ENCODE measurements at regions of chr12 and their contacts with region 1.

Region 1: DNA sequence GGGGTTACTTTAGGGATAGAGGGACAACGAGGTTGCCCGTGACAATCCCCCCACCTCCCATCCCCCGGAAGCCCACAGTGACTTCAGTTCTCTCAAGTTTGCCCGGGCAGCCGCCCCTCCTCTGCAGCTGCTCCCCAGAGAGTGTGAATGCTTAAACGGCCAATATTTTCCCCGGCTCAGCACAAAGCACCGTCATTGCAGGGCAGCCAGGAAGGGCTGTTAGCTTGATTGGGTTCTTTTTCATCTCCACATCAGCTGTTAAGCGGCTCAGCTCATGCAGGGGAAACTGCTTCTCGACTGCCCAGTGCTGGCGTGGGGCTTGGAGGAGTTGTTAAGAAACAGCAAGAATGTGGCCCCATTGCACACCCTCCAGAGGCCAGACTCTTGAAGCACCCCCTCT is 120.5 kb upstream of the NCOR2 start:
- DNase-seq: no peak
- H3K4me3 ChIP-seq: no peak overlapping the region
- H3K27ac ChIP-seq: no peak overlapping the region
- H3K4me1 ChIP-seq: peaks cover 41% of the 10 kb centered on the region
- H3K27me3 ChIP-seq: no peaks in the 10 kb centered on the region
- CTCF ChIP-seq: no peak

Region 2: GRCh38 chr12:124609041-124609995 is 78.6 kb before region 1 on chr12:
- CTCF ChIA-PET with region 1: no interaction called
- dilution Hi-C with region 1: loop called (anchors 5 kb)
- in situ Hi-C with region 1: no loop called
- intact Hi-C with region 1: loop called (anchors 2 kb)
- DNase-seq: peak; percentile 82
- H3K4me3 ChIP-seq: no peak overlapping the region
- H3K27ac ChIP-seq: peak overlapping the region; percentile 12
- H3K4me1 ChIP-seq: peaks cover 22% of the 10 kb centered on the region
- H3K27me3 ChIP-seq: no peaks in the 10 kb centered on the region
- CTCF ChIP-seq: no peak

Region 3: GRCh38 chr12:124620751-124621660 is 66.9 kb before region 1 on chr12:
- CTCF ChIA-PET with region 1: no interaction called
- dilution Hi-C with region 1: loop called (anchors 10 kb)
- in situ Hi-C with region 1: no loop called
- intact Hi-C with region 1: loop called (anchors 2 kb)
- DNase-seq: peak; percentile 94
- H3K4me3 ChIP-seq: no peak overlapping the region
- H3K27ac ChIP-seq: peak overlapping the region; percentile 51
- H3K4me1 ChIP-seq: peaks cover 46% of the 10 kb centered on the region
- H3K27me3 ChIP-seq: no peaks in the 10 kb centered on the region
- CTCF ChIP-seq: no peak

Region 4: GRCh38 chr12:124636138-124636978 is 51.6 kb before region 1 on chr12:
- CTCF ChIA-PET with region 1: no interaction called
- dilution Hi-C with region 1: no loop called
- in situ Hi-C with region 1: no loop called
- intact Hi-C with region 1: loop called (anchors 2 kb)
- DNase-seq: peak; percentile 96
- H3K4me3 ChIP-seq: no peak overlapping the region
- H3K27ac ChIP-seq: peak overlapping the region; percentile 71
- H3K4me1 ChIP-seq: peaks cover 64% of the 10 kb centered on the region
- H3K27me3 ChIP-seq: no peaks in the 10 kb centered on the region
- CTCF ChIP-seq: no peak

Region 5: DNA sequence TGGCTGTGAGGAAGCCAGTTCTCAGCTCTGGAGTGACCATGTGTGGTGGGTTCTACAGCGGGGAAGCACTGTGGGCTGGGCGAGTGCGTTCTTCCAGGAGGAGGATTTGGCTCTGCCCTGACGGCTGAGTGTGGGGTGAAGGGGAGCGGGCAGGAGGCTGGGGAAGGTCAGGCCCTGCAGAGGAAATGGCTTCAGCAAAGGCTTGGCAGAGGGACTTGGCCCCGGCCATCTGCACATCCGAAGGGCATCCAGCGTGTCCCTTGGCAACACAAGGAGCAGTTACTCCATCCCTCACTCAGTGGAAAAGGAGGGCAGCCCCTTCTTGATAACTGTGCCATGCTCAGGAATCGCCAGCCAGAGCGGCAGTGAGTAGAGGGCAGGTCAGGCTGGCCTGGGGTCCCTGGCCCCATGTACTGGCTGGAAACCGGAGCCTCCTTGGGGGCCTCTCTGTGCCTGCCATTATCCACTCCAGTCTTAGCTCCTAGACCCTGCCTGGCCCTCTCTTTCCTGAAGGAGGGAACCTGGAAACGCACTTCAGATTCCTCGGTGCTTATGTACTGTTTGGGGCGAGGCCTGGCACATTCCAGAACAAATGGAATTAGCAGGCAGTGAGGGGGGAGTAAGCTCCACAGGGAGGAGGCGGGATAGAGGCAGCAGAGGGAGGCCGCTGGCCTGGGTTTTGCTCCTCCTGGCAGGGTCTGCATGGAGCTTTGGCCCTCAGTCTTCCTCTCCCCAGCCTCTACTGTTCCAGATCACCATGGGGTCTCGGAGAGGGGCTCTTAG is 13.1 kb after region 1 on chr12:
- CTCF ChIA-PET with region 1: no interaction called
- dilution Hi-C with region 1: no loop called
- in situ Hi-C with region 1: no loop called
- intact Hi-C with region 1: no loop called
- DNase-seq: no peak
- H3K4me3 ChIP-seq: no peak overlapping the region
- H3K27ac ChIP-seq: no peak overlapping the region
- H3K4me1 ChIP-seq: no peaks in the 10 kb centered on the region
- H3K27me3 ChIP-seq: peaks cover 1% of the 10 kb centered on the region
- CTCF ChIP-seq: no peak

Region 6: GRCh38 chr12:124745891-124746570 is 58.1 kb after region 1 on chr12:
- CTCF ChIA-PET with region 1: no interaction called
- dilution Hi-C with region 1: no loop called
- in situ Hi-C with region 1: no loop called
- intact Hi-C with region 1: loop called (anchors 2 kb)
- DNase-seq: peak; percentile 77
- H3K4me3 ChIP-seq: no peak overlapping the region
- H3K27ac ChIP-seq: no peak overlapping the region
- H3K4me1 ChIP-seq: peaks cover 23% of the 10 kb centered on the region
- H3K27me3 ChIP-seq: no peaks in the 10 kb centered on the region
- CTCF ChIP-seq: no peak

Measured in mammary epithelial cell (primary cell).